AG04450 (cell line): ENCODE measurements at regions of chr5 and their contacts with region 1.

Region 1: GRCh38 chr5:151699071-151699901 is 12.6 kb upstream of the SPARC start:
- DNase-seq: peak; percentile 97
- H3K4me3 ChIP-seq: no peak overlapping the region
- H3K27ac ChIP-seq: peak overlapping the region; percentile 100
- H3K27me3 ChIP-seq: no peaks in the 10 kb centered on the region
- CTCF ChIP-seq: no peak

Region 2: DNA sequence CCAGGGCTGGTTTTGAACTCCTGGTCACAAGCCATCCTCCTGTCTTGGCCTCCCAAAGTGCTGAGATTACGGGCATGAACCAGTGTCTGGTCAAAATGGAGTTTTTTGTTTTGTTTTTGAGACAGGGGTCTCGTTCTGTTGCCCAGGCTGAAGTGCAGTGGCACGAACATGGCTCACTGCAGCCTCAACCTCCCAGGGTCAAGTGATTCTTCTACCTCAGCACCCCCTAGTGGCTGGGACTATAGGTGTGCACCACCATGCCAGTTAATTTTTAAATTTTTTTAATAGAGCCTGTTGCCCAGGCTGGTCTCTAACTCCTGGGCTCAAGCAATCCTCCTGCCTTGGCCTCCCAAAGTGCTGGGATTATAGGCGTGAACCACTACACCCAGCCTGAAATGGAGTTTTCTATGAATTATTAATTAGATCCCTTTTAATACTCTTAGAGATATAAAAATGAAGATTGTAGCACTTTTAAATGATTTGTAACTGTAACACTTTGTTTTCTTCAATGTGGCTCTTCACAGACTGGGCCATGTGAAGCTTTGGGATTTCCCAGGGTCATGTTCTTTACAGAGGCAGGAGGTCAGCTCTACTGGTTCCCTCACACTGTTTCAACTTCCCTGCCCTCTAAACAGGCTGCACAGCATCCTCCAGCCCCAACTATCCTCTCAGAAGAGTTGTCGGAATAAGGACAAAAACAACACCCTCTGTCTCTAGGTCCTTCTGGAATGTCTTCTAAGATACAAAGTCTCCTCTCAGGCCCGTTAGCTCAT is 20.1 kb after region 1 on chr5:
- CTCF ChIA-PET with region 1: interaction called, 9 read pairs
- POLR2A ChIA-PET with region 1: interaction called, 15 read pairs
- DNase-seq: no peak
- H3K4me3 ChIP-seq: no peak overlapping the region
- H3K27ac ChIP-seq: peak overlapping the region; percentile 85
- H3K27me3 ChIP-seq: no peaks in the 10 kb centered on the region
- CTCF ChIP-seq: peak; percentile 48

Region 3: DNA sequence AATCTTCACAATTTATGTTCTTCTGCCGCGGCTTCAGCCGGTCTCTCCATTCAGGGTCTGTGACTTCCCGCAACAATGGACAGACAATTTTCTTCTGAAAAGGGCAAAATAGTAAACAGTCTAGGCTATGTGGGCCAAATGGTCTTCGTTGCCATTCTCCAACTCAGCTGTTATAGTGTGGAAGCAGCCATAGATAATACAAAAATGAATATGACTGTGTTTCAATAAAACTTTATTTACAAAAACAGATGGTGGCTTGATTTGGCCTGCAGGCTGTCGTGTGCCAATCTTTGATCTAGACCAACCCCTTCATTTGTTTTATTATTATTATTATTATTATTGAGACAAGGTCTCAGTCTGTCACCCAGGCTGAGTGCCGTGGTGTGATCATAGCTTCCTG is 31.1 kb after region 1 on chr5:
- CTCF ChIA-PET with region 1: no interaction called
- POLR2A ChIA-PET with region 1: no interaction called
- DNase-seq: no peak
- H3K4me3 ChIP-seq: no peak overlapping the region
- H3K27ac ChIP-seq: no peak overlapping the region
- H3K27me3 ChIP-seq: no peaks in the 10 kb centered on the region
- CTCF ChIP-seq: no peak